Head of caudate nucleus (tissue), 42 donors: ENCODE measurements at regions of chr2 and their contacts with region 1.

Region 1: DNA sequence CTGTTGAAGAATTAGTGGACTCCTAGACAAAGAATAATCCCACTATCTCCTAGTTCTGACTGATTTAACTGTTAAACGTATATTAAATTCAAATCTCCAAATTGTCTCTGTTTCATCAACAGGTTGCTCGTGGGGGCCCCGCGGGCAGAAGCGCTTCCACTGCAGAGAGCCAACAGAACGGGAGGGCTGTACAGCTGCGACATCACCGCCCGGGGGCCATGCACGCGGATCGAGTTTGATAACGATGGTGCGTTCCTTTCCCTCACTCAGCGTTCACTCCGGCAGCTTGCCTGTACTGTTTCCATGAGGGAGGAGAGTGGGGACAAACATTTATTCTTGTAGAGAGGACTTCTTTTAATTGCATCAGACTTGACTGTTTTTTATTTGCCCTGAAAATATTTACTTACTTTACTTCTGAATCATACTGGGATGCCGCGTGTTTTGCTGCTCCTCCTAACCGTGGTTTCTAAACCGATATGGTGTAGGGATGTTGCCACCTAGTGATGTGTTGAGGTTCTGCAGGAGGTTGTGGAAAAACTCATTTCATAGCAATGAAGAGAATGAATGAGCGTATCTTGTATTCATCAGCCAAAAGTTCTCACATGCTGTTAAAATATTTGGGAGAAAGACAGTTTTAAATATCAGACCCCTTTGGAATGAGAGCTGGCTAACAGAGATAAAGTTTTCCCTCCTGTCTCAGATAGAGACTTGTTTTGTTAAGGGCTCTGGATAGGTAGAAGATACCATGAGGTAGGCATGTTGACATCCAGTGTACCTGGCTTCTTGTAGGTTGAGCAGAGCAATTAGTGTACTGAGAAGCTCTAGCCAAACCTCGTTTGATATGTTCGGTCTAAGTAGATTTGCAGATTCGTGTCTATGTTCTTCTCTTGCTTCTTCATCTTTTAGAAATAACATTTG is 38.3 kb downstream of the ITGA6 start:
- DNase-seq: peak; percentile 38 to 91 (median 74)

Region 2: GRCh38 chr2:172009823-172010222 is 455.9 kb before region 1 on chr2:
- intact Hi-C with region 1: no loop called
- DNase-seq: no peak

Region 3: DNA sequence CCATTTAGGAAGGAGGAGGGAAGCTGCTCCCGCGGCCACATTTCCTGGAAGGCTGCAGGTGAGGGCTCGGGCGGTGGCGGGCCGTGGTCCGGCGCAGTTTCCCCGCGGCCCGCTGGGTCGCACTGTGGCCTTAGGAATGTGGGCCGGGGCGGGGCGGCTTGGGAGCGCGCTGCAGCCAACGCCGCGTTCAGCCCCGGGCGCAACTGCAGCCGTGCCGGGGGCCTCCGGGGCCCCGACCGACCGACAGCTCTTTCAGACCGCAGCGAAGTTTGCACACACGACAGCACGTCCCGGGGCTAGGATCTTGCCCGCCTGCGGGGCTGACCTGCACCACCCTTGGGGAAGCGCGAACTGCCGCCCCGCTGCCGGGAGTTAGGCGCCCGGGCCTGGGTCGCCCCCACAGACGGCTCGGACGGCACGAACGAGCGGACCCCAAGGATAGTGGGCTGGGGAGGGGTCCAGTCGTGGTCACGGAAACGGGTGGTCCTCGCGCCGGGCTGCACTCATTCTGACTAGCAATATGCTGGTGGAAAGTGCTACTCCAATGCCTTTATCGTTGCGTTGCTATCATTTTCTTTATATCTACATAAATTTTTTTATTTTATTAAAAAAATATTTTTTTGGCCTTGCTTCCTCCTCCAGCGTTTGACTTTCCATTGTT is 293.0 kb before region 1 on chr2:
- intact Hi-C with region 1: loop called (anchors 2 kb)
- DNase-seq: peak in 41 of 42 donors; percentile 20 to 84 (median 62)